Posterior vena cava (tissue), 2 donors: ENCODE measurements at regions of chr5 and their contacts with region 1.

Region 1: GRCh38 chr5:133839721-133840120 is 128.7 kb downstream of the C5orf15 start:
- DNase-seq: no peak

Region 2: GRCh38 chr5:133773247-133774202 is 66.2 kb before region 1 on chr5:
- intact Hi-C with region 1: no loop called
- DNase-seq: no peak

Region 3: DNA sequence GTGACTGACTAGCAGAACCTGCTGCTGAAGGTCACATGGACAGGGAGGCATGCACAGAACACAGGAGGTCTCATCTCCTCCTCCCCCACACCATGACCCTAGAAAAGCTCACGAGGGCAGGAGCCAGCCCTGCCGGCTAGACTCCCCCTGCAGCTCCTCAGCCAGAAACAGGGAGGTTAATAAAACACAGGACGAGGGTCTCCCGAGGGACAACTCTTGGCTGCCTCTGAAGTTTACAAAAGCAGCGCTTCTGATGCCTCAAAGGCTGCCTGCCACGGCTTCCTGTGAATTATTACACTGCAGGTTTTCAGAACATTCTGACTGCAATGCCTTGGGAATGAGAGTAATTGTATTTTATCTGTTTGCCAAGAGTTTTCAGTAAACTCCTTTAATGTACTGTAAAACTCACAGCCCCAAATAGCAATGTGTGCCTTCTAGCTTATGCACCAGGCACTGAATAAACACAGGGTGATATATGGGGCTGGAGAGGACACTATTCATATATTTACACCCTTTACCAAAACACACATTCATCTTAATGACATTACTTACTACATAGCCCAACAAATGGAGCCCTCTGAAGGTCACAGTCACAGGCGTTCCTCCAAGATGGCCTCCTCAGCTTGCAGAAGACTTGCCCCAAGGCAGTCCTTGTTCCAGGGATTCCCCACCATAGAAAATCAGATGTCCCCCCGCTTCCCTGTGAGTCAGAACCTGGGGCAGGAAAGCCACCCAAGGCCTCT is 45.0 kb after region 1 on chr5:
- intact Hi-C with region 1: loop called in 1 of 2 experiments (anchors 1 kb)
- DNase-seq: peak; percentile 58